ENCODE measurements at regions of chr1 and their contacts with region 1.

Region 1: DNA sequence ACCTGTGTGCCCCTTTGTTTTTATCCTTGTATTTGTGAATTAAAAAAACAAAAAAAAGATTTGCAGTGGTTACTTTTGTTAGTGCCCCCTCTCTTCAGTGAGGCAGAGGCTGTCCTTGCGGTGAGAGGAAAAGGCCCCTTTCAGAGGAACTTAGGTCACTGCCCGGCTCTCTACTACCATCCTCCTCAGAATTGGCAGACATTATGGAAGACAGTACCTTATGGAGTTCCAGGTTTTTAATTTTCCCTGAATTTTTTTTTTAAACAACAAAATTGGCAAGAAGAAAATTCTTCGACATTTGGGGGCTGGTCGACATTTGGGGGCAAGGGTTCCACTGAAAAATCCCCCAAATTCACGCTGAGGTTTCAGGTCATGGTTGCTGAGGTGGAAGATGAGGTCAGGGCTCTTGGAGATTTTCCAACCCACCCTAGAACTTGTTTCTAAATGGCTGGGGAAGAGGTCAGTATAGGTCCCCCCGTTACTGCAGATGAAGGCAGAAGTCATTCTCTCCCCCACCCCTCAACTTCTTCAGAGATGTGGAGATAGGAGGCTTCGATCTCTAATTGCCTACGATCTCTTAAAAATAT is 5.3 kb downstream of the RXFP4 start:
- DNase-seq: no peak
- H3K4me3 Mint-ChIP-seq: no peak overlapping the region
- H3K27ac Mint-ChIP-seq: peak overlapping the region; percentile 88
- H3K4me1 Mint-ChIP-seq: peaks cover 55% of the 10 kb centered on the region
- H3K27me3 Mint-ChIP-seq: no peaks in the 10 kb centered on the region

Region 2: GRCh38 chr1:155479205-155479604 is 467.5 kb before region 1 on chr1:
- CTCF ChIA-PET with region 1: no interaction called
- DNase-seq: no peak
- H3K4me3 Mint-ChIP-seq: no peak overlapping the region
- H3K27ac Mint-ChIP-seq: no peak overlapping the region
- H3K4me1 Mint-ChIP-seq: no peaks in the 10 kb centered on the region
- H3K27me3 Mint-ChIP-seq: no peaks in the 10 kb centered on the region

Region 3: GRCh38 chr1:155934097-155934935 is 12.4 kb before region 1 on chr1 and contains the start of gene KHDC4:
- CTCF ChIA-PET with region 1: interaction called, 14 read pairs
- DNase-seq: peak; percentile 97
- H3K4me3 Mint-ChIP-seq: no peak within 1 kb of the TSS
- H3K27ac Mint-ChIP-seq: peak within 1 kb of the TSS; percentile 68
- H3K4me1 Mint-ChIP-seq: peaks cover 50% of the 10 kb centered on the region
- H3K27me3 Mint-ChIP-seq: no peaks in the 10 kb centered on the region